ENCODE measurements at regions of chr15 and their contacts with region 1.

Region 1: GRCh38 chr15:90387537-90388461 is at the start of gene IQGAP1:
- DNase-seq: peak; percentile 84 to 97
- ATAC-seq: peak; percentile 87 to 99 (median 89)
- H3K4me3 ChIP-seq: peak within 1 kb of the TSS; percentile 97
- H3K4me3 Mint-ChIP-seq: peak within 1 kb of the TSS; percentile 96
- H3K27ac ChIP-seq: peak within 1 kb of the TSS; percentile 97
- H3K27ac Mint-ChIP-seq: peak within 1 kb of the TSS; percentile 53 to 96
- H3K4me1 ChIP-seq: peaks cover 35% of the 10 kb centered on the region
- H3K4me1 Mint-ChIP-seq: peaks cover 48 to 55% of the 10 kb centered on the region in 2 donors
- H3K27me3 ChIP-seq: no peaks in the 10 kb centered on the region
- H3K27me3 Mint-ChIP-seq: no peaks in the 10 kb centered on the region
- CTCF ChIP-seq: no peak
- total RNA-seq, gene IQGAP1: 431 to 493 (median 446) TPM

Region 2: GRCh38 chr15:90419738-90420406 is 32.1 kb after region 1 on chr15:
- intact Hi-C with region 1: loop called (anchors 1 kb)
- DNase-seq: no peak
- ATAC-seq: peak in 2 of 3 donors; percentile 24 to 41
- H3K4me3 ChIP-seq: no peak overlapping the region
- H3K4me3 Mint-ChIP-seq: peak overlapping the region; percentile 81
- H3K27ac ChIP-seq: peak overlapping the region; percentile 30
- H3K27ac Mint-ChIP-seq: peak overlapping the region; percentile 89 to 93
- H3K4me1 ChIP-seq: peaks cover 48% of the 10 kb centered on the region
- H3K4me1 Mint-ChIP-seq: peaks cover 77 to 81% of the 10 kb centered on the region in 2 donors
- H3K27me3 ChIP-seq: no peaks in the 10 kb centered on the region
- H3K27me3 Mint-ChIP-seq: no peaks in the 10 kb centered on the region
- CTCF ChIP-seq: no peak

Region 3: DNA sequence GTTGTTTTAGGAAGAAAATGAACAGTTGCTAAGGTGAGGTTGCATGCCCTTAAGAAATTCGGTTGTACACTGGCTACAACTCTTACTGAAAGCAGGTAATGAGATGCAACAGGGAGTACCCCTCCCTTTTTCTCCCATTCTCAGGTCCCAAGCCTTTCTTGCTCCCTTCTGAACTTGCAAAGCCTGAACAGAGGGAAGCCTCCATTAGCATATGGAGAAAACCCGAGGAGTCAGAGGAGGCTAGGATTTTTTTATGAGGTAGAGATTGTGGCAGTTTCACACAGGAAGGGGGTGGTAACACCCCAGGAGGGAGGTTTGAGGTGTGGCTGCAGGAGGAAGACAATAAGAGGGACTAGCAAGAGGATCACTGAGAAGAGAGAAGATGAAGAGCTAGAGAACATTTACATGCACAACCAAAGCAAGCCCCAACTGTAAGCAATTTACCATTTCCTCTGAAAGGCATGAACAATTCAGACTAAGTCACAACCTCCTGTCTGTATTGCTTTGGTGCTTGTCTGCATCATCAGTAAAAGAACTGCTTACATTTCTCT is 1035.0 kb after region 1 on chr15:
- intact Hi-C with region 1: no loop called
- DNase-seq: peak in 1 of 2 donors; percentile 48
- ATAC-seq: peak; percentile 57 to 63 (median 59)
- H3K4me3 ChIP-seq: no peak overlapping the region
- H3K4me3 Mint-ChIP-seq: peak overlapping the region; percentile 66
- H3K27ac ChIP-seq: no peak overlapping the region
- H3K27ac Mint-ChIP-seq: peak overlapping the region in 1 of 2 donors; percentile 12
- H3K4me1 ChIP-seq: peaks cover 23% of the 10 kb centered on the region
- H3K4me1 Mint-ChIP-seq: peaks cover 51 to 64% of the 10 kb centered on the region in 2 donors
- H3K27me3 ChIP-seq: no peaks in the 10 kb centered on the region
- H3K27me3 Mint-ChIP-seq: peaks cover 9 to 35% of the 10 kb centered on the region in 2 donors
- CTCF ChIP-seq: no peak